ENCODE measurements at regions of chr11 and their contacts with region 1.

Region 1: GRCh38 chr11:46429717-46430116 is 38.1 kb upstream of the CHRM4 start:
- DNase-seq: no peak
- H3K4me3 ChIP-seq: no peak overlapping the region
- H3K27me3 ChIP-seq: no peaks in the 10 kb centered on the region
- CTCF ChIP-seq: no peak

Region 2: DNA sequence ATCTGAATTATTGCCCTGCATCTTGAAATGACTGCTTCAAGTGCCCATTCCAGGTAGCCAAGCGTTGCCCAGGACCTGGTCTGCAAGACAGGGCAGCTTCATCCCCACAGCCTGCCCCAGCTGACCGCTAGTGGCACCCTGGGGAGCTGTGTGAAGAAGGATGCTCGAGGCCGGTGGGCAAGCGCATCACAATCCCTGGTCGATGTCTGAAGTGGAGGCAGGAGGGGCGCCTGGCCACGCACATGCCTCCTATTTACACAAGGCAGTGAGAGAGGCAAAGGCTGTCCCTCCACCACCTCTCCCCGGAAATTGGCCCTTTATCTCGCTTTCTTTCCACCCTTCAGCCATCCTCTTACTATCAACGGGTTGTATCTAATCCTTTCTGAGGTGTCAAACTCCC is 280.4 kb before region 1 on chr11:
- CTCF ChIA-PET with region 1: no interaction called
- POLR2A ChIA-PET with region 1: no interaction called
- DNase-seq: no peak
- H3K4me3 ChIP-seq: no peak overlapping the region
- H3K27me3 ChIP-seq: peaks cover 7% of the 10 kb centered on the region; the same call in 1 of the 2 replicates
- CTCF ChIP-seq: no peak

Region 3: GRCh38 chr11:46315033-46315738 is 114.5 kb before region 1 on chr11:
- CTCF ChIA-PET with region 1: no interaction called
- POLR2A ChIA-PET with region 1: no interaction called
- DNase-seq: no peak
- H3K4me3 ChIP-seq: no peak overlapping the region
- H3K27me3 ChIP-seq: no peaks in the 10 kb centered on the region
- CTCF ChIP-seq: peak; percentile 88

Region 4: DNA sequence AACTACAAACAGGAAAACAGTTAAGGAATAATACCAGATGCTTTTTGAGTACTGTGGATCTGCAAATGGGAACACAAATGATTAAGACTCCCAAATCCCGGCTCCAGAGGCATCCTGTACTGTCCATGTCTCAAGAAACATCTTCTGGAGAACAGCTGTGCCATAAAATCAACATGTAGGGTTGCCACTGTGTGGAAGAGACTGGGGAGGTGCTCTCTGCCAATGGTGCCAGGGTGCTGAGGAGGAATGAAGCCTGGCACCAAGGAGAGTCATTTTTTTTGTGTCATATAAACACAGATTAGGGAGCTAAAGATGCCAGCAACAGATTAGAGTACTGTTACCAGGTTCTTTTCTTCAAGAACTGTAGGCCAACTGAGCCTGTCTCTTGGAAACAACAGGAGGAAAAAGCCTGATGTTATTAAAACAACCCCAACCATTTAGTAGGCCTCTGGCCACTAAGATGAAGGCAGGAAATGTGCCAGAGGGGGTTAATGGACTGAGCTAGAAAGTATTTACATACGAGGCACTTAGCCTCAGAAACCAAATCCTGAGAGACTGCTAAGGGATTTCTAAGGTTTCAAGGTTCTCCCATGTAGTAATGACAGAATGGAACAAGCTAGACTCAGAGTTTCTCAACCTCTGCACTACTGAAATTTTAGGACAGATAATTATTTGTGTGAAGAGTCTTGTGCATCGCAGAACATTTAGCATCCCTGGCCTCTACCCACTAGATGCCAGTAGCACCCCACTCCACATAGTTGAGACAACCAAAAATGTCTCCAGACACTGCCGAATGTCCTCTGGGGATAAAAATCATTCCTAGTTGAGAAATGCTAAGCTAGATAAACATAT is 16.4 kb after region 1 on chr11:
- CTCF ChIA-PET with region 1: interaction called, 12 read pairs
- POLR2A ChIA-PET with region 1: no interaction called
- DNase-seq: no peak
- H3K4me3 ChIP-seq: no peak overlapping the region
- H3K27me3 ChIP-seq: no peaks in the 10 kb centered on the region
- CTCF ChIP-seq: peak; percentile 37